AG04449 (cell line): ENCODE measurements at regions of chr1 and their contacts with region 1.

Region 1: GRCh38 chr1:201559679-201560162 is 20.8 kb downstream of the NAV1 start:
- DNase-seq: no peak
- H3K4me3 ChIP-seq: no peak overlapping the region
- CTCF ChIP-seq: peak; percentile 96

Region 2: DNA sequence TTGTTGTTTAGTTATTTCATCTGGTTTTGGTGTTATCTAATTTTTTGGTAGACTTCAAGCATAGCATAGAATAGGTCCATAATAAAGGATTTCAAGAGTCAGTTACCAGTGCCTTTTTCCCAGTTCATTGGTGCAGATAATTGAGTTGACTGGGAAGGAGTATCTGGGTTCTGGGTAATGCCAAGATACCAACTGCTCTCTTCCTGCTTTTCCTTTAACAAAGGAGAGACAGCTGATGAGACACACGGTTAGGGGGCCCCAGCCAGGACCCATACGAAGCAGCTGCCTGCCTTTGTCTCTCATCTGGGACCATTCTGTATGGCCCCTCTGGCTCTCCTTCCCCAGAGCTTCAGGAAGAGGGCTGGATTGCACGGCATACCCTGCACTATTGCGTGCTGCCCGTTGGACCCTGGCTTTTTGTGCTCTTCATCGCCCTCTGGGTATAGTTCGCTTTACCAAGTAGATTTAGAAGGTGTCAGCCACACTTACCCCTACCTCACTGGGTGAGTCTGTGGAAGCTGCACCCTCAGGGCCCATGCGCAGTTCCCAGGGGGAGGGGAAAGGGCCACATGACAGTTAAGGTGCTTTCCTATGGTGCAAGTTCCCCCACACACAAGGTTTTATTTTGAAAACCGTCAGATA is 13.7 kb before region 1 on chr1:
- CTCF ChIA-PET with region 1: interaction called, 23 read pairs
- POLR2A ChIA-PET with region 1: no interaction called
- DNase-seq: no peak
- H3K4me3 ChIP-seq: no peak overlapping the region
- CTCF ChIP-seq: no peak

Region 3: DNA sequence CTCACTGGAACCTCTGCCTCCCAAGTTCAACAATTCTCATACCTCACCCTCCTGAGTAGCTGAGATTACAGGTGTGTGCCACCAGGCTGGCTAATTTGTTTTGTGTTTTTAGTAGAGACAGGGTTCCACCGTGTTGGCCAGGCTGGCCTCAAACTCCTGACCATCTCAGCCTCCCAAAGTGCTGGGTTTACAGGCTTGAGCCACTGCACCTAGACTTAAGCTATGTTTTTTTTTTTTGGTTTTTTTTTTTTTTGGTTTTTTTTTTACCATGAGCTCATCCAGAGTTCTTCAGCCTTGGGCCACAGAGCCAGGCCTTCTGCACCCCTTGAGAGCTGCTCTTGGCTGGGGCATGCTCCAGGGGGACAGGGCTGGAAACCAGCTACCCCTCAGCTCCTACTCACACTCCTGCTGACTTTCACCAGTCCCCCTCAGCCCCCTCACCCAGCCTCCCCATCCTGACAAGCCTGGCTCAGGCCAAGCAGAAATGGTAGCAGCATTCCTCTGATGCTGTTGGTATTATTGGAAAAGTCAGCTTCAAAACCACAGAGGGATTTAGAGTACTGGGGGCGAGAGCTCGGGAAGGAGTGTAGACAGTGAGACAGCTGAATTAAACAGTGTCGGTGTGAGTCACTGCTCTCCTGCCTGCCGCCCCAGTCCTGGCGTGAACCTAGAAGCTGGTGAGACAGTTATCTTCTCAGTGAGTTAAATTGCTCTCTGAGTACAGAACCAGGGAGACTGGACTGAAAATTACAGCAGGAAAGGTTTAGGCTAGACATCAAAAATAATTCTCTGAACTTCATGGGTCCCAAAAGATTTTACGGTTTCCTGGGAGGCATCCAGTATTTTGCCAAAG is 42.9 kb after region 1 on chr1:
- CTCF ChIA-PET with region 1: interaction called, 39 read pairs
- POLR2A ChIA-PET with region 1: interaction called, 26 read pairs
- DNase-seq: peak; percentile 87
- H3K4me3 ChIP-seq: no peak overlapping the region
- CTCF ChIP-seq: no peak

Region 4: DNA sequence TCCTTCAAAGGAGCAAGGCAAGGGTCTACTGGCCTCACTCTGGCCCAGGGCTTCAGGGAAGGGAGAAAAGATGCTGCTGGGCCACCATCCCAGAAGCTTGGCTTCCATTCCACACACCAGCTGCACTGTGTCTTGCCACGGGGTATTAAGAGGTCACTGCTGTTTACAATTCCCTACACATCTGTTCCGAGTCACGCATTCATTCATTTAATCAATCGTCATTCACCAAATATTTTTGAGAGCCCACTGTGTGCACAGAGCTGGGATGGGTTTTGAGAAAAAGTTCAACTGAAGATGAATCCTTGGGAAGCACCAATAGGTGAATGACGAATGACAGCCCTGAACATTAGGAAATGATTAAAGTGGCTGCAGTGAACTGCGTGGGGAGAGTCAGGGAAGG is 80.9 kb after region 1 on chr1:
- CTCF ChIA-PET with region 1: interaction called, 13 read pairs
- POLR2A ChIA-PET with region 1: interaction called, 3 read pairs
- DNase-seq: no peak
- H3K4me3 ChIP-seq: no peak overlapping the region
- CTCF ChIP-seq: no peak

Region 5: DNA sequence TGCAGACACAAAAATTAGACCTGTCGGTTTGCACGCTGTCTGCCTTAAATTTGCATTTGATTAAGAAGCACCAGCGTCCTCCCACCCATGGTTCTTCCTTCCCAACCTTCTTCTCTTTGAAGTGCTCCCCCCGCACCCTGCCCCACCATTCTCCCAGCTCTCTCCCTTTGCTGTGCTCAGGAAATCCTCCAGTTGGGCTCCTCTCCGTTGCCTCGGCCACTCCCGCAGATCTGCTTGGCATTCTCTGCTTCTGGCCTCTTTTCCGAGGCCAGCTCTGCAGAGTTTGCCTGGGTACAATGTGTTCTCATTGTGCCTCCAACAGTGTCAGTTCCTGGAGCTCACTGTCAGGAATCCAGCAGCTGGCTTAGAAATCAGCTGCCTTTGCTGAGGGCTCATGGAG is 105.3 kb after region 1 on chr1:
- CTCF ChIA-PET with region 1: interaction called, 14 read pairs
- POLR2A ChIA-PET with region 1: no interaction called
- DNase-seq: no peak
- H3K4me3 ChIP-seq: no peak overlapping the region
- CTCF ChIP-seq: no peak

Region 6: GRCh38 chr1:201766131-201766866 is 206.6 kb after region 1 on chr1:
- CTCF ChIA-PET with region 1: no interaction called
- POLR2A ChIA-PET with region 1: no interaction called
- DNase-seq: peak; percentile 91
- H3K4me3 ChIP-seq: no peak overlapping the region
- CTCF ChIP-seq: no peak

Region 7: DNA sequence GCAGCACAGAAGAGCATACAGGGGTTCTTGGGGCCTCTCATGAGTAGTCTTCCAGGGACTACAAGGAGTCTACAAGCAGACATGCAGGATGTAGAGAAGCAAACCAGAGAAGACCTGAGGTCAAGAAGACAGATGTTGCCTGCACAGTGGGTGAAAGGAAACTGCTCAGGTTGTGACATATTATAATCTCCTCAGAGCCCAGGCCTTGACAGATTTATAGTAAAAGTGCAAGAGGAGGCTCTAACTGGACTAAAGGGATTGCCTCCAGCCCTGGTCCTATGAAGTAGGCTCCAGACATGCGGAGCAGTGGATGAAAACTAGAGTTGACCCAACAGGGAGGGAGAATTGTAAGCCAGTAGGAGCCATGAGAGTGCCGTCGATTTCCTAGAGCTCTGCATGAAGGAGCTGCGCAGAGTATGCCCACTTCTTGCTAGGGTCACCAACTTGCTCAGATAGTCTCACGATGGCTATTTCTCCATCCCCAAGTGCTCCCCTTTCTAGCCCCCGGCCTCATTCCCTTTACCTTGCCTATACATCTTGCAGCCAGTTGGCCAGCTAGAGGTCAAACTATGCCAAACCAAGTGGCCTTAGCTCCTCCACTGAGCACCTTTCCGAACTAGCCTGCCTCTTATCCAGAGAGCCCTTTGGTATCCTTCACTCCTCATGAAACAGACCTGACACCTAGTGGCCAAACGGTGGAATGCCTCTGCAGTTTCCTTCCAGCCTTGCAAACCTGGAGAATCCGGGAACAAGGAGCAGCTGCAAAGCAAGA is 233.0 kb after region 1 on chr1:
- CTCF ChIA-PET with region 1: interaction called, 144 read pairs
- POLR2A ChIA-PET with region 1: no interaction called
- DNase-seq: peak; percentile 37
- H3K4me3 ChIP-seq: no peak overlapping the region
- CTCF ChIP-seq: peak; percentile 91